Activated naive CD8-positive, alpha-beta T cell treated with anti-CD3 and anti-CD28 coated beads, Interleukin-2, amount 10 ng/mL, durations not matched to agents 7 days and 5 days (primary cell): ENCODE measurements at regions of chr19 and their contacts with region 1.

Region 1: GRCh38 chr19:56333505-56333904 is 18.9 kb upstream of the ZSCAN5A start:
- DNase-seq: no peak
- ATAC-seq: no peak
- H3K4me3 Mint-ChIP-seq: no peak overlapping the region
- H3K27ac Mint-ChIP-seq: no peak overlapping the region
- H3K4me1 Mint-ChIP-seq: no peaks in the 10 kb centered on the region
- H3K27me3 Mint-ChIP-seq: peaks cover 2% of the 10 kb centered on the region

Region 2: GRCh38 chr19:56217039-56217949 is 116.2 kb before region 1 on chr19:
- POLR2A ChIA-PET with region 1: no interaction called
- DNase-seq: peak; percentile 39
- ATAC-seq: peak; percentile 77
- H3K4me3 Mint-ChIP-seq: peak overlapping the region; percentile 70
- H3K27ac Mint-ChIP-seq: no peak overlapping the region
- H3K4me1 Mint-ChIP-seq: peaks cover 8% of the 10 kb centered on the region
- H3K27me3 Mint-ChIP-seq: peaks cover 19% of the 10 kb centered on the region

Region 3: DNA sequence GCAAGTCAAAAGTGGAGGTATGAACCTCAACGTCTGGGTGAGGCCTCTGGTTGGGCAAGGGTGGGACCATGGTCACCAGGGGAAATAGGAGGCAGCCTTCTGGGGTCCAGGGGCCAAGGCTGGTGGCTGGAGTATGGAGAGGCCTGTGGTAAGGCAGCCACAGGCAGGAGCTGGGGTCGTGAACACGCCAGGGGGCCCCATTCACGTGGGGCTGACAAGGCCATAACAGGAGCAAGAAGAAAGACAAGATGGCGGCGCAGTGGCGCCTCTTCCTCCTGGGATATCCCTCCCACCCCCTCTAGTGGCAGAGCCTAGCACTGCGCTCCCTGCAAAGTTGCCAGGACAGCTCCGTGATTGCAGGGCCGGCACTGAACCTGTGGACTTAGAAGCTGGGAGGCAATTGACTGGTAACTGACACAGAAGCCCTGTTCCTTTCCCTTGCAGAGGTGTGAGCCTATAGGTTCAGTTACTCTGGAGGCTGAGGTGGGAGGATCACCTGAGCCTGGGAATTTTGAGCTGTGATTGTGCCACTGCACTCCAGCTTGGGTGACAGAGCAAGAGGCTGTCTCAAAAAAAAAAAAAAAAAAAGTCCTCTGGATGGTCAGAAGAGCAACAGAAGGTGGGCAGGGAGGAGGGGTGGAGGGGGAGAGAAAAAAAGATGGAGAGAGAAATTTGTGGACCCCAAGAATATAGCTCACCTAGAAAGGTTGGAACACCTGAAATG is 80.6 kb before region 1 on chr19:
- POLR2A ChIA-PET with region 1: interaction called, 10 read pairs
- DNase-seq: peak; percentile 82
- ATAC-seq: peak; percentile 78
- H3K4me3 Mint-ChIP-seq: no peak overlapping the region
- H3K27ac Mint-ChIP-seq: no peak overlapping the region
- H3K4me1 Mint-ChIP-seq: no peaks in the 10 kb centered on the region
- H3K27me3 Mint-ChIP-seq: no peaks in the 10 kb centered on the region

Region 4: DNA sequence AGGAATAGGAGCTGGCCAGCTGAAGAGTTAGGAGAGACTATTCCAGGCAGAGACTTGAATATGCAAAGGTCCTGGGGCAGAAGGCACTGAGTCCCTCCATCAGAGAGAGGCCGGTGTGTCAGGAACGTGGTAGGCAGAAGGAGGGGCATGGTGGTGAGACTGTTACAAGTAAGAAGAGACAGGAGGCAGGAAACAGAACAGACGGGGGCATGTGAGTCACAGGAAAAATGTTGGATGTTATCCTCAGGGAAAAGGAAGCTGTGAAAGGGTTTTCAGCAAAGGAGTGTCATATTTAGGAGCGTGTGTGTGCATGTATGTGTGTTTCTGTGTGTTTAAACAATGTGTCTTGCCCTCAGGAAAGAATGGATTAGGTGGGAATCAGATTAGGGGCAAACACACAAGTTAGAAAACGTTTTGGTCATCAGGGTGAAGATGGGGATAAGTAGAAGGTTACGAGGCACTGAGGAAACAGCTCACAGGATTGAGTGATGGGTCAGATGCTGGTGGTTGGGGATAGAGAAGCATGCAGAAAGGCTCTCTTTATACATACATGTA is 59.9 kb before region 1 on chr19:
- POLR2A ChIA-PET with region 1: no interaction called
- DNase-seq: no peak
- ATAC-seq: no peak
- H3K4me3 Mint-ChIP-seq: no peak overlapping the region
- H3K27ac Mint-ChIP-seq: no peak overlapping the region
- H3K4me1 Mint-ChIP-seq: no peaks in the 10 kb centered on the region
- H3K27me3 Mint-ChIP-seq: no peaks in the 10 kb centered on the region